CD4-positive, alpha-beta memory T cell (primary cell): ENCODE measurements at regions of chr1 and their contacts with region 1.

Region 1: GRCh38 chr1:25204797-25205480 is 27.4 kb downstream of the SYF2 start:
- DNase-seq: peak in 4 of 5 donors; percentile 45 to 59 (median 50)
- H3K4me3 ChIP-seq: no peak overlapping the region
- H3K4me3 Mint-ChIP-seq: no peak overlapping the region
- H3K27ac ChIP-seq: no peak overlapping the region
- H3K27ac Mint-ChIP-seq: no peak overlapping the region
- H3K4me1 ChIP-seq: no peaks in the 10 kb centered on the region
- H3K4me1 Mint-ChIP-seq: peaks cover 0 to 2% (median 0%) of the 10 kb centered on the region in 4 donors
- H3K27me3 ChIP-seq: no peaks in the 10 kb centered on the region
- H3K27me3 Mint-ChIP-seq: peaks cover under 1 to 9% of the 10 kb centered on the region in 2 donors

Region 2: DNA sequence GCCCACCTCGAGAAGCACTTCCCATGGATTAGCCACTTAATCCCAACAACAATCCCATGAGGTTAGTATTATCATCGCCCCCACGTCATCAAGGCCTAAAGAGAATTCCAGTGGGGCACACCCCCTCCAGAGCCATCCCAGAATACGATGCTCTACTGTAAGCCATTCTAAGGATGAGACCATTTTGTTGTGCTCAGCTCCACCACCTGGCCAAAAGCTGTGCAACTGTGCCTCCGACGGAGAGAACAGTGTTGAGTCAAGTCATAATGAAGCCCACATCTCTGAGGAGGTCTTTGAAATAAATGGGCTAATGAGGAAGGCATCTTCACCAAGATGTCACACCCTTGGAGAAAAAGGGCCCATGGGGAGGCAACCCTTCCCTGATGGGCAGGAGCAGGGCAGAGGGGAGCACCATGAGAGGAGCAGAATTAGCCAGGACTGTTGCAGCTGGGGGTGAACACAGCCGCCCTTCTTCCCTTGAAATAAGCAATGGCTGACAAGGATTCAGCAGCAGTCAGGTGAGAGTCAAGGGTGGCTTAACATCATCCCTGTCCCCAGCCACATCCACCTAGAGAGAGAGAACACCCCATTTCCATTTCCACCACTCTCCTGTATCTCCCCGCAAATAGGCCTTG is 12.8 kb after region 1 on chr1:
- CTCF ChIA-PET with region 1: interaction called, 15 read pairs
- POLR2A ChIA-PET with region 1: no interaction called
- intact Hi-C with region 1: no loop called
- DNase-seq: no peak
- H3K4me3 ChIP-seq: no peak overlapping the region
- H3K4me3 Mint-ChIP-seq: no peak overlapping the region
- H3K27ac ChIP-seq: no peak overlapping the region
- H3K27ac Mint-ChIP-seq: peak overlapping the region in 2 of 7 donors; percentile 32 to 52
- H3K4me1 ChIP-seq: no peaks in the 10 kb centered on the region
- H3K4me1 Mint-ChIP-seq: peaks cover 3 to 6% (median 5%) of the 10 kb centered on the region in 4 donors
- H3K27me3 ChIP-seq: no peaks in the 10 kb centered on the region
- H3K27me3 Mint-ChIP-seq: no peaks in the 10 kb centered on the region